ENCODE measurements at regions of chr22 and their contacts with region 1.

Region 1: GRCh38 chr22:36277482-36278291 is 24.8 kb downstream of the APOL1 start:
- DNase-seq: peak; percentile 49 to 84
- ATAC-seq: peak; percentile 74 to 98 (median 84)
- H3K4me3 ChIP-seq: no peak overlapping the region
- H3K4me3 Mint-ChIP-seq: no peak overlapping the region
- H3K27ac ChIP-seq: no peak overlapping the region
- H3K27ac Mint-ChIP-seq: peak overlapping the region; percentile 37 to 71
- H3K4me1 ChIP-seq: peaks cover 10% of the 10 kb centered on the region
- H3K4me1 Mint-ChIP-seq: peaks cover 10 to 12% of the 10 kb centered on the region in 2 donors
- H3K27me3 ChIP-seq: no peaks in the 10 kb centered on the region
- H3K27me3 Mint-ChIP-seq: no peaks in the 10 kb centered on the region
- CTCF ChIP-seq: peak; percentile 77

Region 2: GRCh38 chr22:36144886-36145541 is 132.7 kb before region 1 on chr22:
- intact Hi-C with region 1: loop called (anchors 5 kb)
- DNase-seq: peak in 1 of 2 donors; percentile 65
- ATAC-seq: peak; percentile 61 to 82 (median 77)
- H3K4me3 ChIP-seq: no peak overlapping the region
- H3K4me3 Mint-ChIP-seq: no peak overlapping the region
- H3K27ac ChIP-seq: no peak overlapping the region
- H3K27ac Mint-ChIP-seq: peak overlapping the region; percentile 71 to 77
- H3K4me1 ChIP-seq: peaks cover 11% of the 10 kb centered on the region
- H3K4me1 Mint-ChIP-seq: peaks cover 14 to 25% of the 10 kb centered on the region in 2 donors
- H3K27me3 ChIP-seq: no peaks in the 10 kb centered on the region
- H3K27me3 Mint-ChIP-seq: no peaks in the 10 kb centered on the region
- CTCF ChIP-seq: peak; percentile 62

Region 3: DNA sequence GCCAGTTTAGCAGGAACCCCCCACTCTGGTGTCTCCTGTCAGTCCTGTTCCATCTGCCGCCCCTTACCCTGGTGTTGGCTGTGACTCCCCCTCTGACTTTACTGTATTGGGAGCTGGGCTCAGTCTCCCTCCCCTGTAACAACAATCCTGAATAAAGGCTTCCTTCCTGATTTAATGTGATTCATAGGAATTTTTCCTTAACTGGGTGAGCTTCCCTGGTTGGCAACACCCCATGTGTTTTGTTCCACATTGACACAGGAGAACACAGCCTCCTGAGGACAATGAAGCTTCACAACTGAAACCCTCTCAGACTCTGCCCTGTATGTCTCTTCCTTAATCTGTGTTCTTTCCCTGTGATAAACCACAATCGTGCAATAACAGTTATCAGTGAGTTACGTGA is 84.5 kb before region 1 on chr22:
- intact Hi-C with region 1: loop called (anchors 1 kb)
- DNase-seq: no peak
- ATAC-seq: no peak
- H3K4me3 ChIP-seq: no peak overlapping the region
- H3K4me3 Mint-ChIP-seq: no peak overlapping the region
- H3K27ac ChIP-seq: no peak overlapping the region
- H3K27ac Mint-ChIP-seq: no peak overlapping the region
- H3K4me1 ChIP-seq: peaks cover 17% of the 10 kb centered on the region
- H3K4me1 Mint-ChIP-seq: peaks cover 18 to 20% of the 10 kb centered on the region in 2 donors
- H3K27me3 ChIP-seq: no peaks in the 10 kb centered on the region
- H3K27me3 Mint-ChIP-seq: peaks cover 0 to 6% of the 10 kb centered on the region in 2 donors
- CTCF ChIP-seq: no peak

Region 4: DNA sequence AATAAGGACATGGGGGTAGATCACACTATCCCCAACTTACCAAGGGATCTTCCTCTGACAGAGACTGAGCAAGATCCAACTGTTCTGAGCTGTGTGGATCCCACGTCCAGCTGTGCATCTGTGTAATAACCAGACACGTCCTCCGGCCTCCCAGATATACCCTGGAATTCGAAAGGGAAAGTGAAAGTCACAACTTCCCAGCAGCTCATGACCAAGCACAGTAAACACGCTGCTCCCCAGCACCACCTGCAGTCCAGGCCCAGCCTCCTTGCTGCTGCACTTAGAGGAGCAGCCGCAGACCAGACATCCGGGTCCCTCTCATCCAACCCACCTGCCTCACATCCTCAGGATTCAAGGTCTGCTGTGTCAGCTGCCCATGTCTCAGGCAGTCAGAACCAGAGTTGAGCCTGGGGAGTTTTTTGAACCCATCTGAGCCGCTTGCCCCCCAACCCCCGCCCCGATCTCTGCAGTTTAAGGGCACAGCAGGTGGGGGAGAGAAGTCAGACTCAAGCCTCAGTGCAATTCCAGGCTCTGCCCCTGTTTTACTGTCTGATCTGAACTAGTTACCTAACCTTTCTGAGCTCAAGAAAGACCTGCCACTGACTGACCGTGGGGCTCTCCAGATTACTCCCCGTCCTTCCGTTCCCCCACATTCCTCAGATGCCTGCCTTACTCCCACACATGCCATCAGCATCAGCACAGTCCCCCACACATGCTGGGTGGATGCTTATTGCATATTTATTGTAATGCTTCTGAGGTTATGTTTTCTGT is 38.1 kb before region 1 on chr22 and contains the start of gene APOL2:
- intact Hi-C with region 1: loop called (anchors 5 kb)
- DNase-seq: peak; percentile 74 to 93
- ATAC-seq: peak; percentile 94 to 98 (median 95)
- H3K4me3 ChIP-seq: peak within 1 kb of the TSS; percentile 99
- H3K4me3 Mint-ChIP-seq: peak within 1 kb of the TSS; percentile 99
- H3K27ac ChIP-seq: peak within 1 kb of the TSS; percentile 95
- H3K27ac Mint-ChIP-seq: peak within 1 kb of the TSS; percentile 98
- H3K4me1 ChIP-seq: peaks cover 43% of the 10 kb centered on the region
- H3K4me1 Mint-ChIP-seq: peaks cover 49 to 52% of the 10 kb centered on the region in 2 donors
- H3K27me3 ChIP-seq: no peaks in the 10 kb centered on the region
- H3K27me3 Mint-ChIP-seq: no peaks in the 10 kb centered on the region
- CTCF ChIP-seq: peak; percentile 57
- total RNA-seq, gene APOL2: 51.7 to 112 (median 67.2) TPM

Region 5: GRCh38 chr22:36301384-36301828 is 23.7 kb after region 1 on chr22:
- intact Hi-C with region 1: no loop called
- DNase-seq: peak; percentile 79 to 92
- ATAC-seq: peak; percentile 88 to 97 (median 92)
- H3K4me3 ChIP-seq: no peak overlapping the region
- H3K4me3 Mint-ChIP-seq: no peak overlapping the region
- H3K27ac ChIP-seq: no peak overlapping the region
- H3K27ac Mint-ChIP-seq: peak overlapping the region in 1 of 2 donors; percentile 64
- H3K4me1 ChIP-seq: peaks cover 7% of the 10 kb centered on the region
- H3K4me1 Mint-ChIP-seq: peaks cover 4 to 14% of the 10 kb centered on the region in 2 donors
- H3K27me3 ChIP-seq: no peaks in the 10 kb centered on the region
- H3K27me3 Mint-ChIP-seq: no peaks in the 10 kb centered on the region
- CTCF ChIP-seq: peak; percentile 95

Measured in natural killer cell (primary cell).